PC-9 (cell line): ENCODE measurements at regions of chrX and their contacts with region 1.

Region 1: GRCh38 chrX:54044126-54044876 is at the start of gene PHF8:
- DNase-seq: peak; percentile 93 to 98
- H3K4me3 ChIP-seq: peak within 1 kb of the TSS; percentile 96
- H3K27ac ChIP-seq: peak within 1 kb of the TSS; percentile 98
- H3K4me1 ChIP-seq: peaks cover 17% of the 10 kb centered on the region
- H3K27me3 ChIP-seq: no peaks in the 10 kb centered on the region
- CTCF ChIP-seq: no peak
- total RNA-seq, gene PHF8: 40.0 and 56.4 TPM in 2 replicates

Region 2: GRCh38 chrX:53544940-53545339 is 499.4 kb before region 1 on chrX:
- CTCF ChIA-PET with region 1: interaction called, 10 read pairs
- POLR2A ChIA-PET with region 1: no interaction called
- intact Hi-C with region 1: no loop called
- DNase-seq: no peak
- H3K4me3 ChIP-seq: no peak overlapping the region
- H3K27ac ChIP-seq: no peak overlapping the region
- H3K4me1 ChIP-seq: no peaks in the 10 kb centered on the region
- H3K27me3 ChIP-seq: no peaks in the 10 kb centered on the region
- CTCF ChIP-seq: no peak

Region 3: GRCh38 chrX:54157561-54157960 is 113.3 kb after region 1 on chrX:
- CTCF ChIA-PET with region 1: interaction called, 14 read pairs
- POLR2A ChIA-PET with region 1: no interaction called
- intact Hi-C with region 1: no loop called
- DNase-seq: no peak
- H3K4me3 ChIP-seq: no peak overlapping the region
- H3K27ac ChIP-seq: no peak overlapping the region
- H3K4me1 ChIP-seq: no peaks in the 10 kb centered on the region
- H3K27me3 ChIP-seq: no peaks in the 10 kb centered on the region
- CTCF ChIP-seq: no peak

Region 4: DNA sequence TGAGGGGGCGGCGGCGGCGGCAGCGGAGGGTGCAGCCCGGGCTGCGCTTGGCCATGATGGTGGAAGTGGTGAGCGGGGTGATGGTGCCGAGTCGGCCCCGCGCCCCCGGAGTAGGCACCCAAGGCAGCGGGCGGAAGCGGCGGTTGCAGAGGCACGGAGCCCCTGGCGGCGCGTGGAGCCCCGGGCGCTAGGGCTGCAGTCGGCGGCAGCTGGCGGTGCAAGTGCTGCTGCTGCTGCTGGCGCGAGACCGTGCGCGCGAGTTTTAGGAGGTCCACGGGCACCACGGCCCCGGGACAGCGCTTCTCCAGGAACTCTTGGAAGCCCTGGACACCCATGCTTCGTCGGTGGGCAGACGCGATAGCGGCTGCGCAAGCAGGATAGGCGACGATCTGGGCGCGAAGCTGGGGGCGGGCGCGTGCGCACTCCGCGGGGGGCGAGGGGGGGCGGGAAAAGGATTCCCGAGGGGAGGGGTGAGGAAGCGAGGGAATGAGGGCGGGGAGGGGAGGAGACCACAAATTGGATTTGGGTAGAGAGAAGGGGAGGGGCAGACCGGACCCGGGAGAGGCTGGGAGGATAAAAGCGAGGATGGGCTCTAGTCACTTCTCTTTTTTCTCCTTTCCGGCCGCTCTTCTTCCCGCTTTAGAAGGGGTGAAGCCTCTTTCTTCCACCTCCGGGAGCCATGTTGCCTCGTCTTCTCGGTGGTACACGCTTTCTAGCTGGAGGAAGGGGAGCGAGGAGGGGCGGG is 138.7 kb after region 1 on chrX and contains the start of gene FAM120C:
- CTCF ChIA-PET with region 1: interaction called, 10 read pairs
- POLR2A ChIA-PET with region 1: interaction called, 4 read pairs
- intact Hi-C with region 1: loop called (anchors 1 kb)
- DNase-seq: peak; percentile 53 to 72
- H3K4me3 ChIP-seq: peak within 1 kb of the TSS; percentile 78
- H3K27ac ChIP-seq: peak within 1 kb of the TSS; percentile 73
- H3K4me1 ChIP-seq: peaks cover 40% of the 10 kb centered on the region
- H3K27me3 ChIP-seq: no peaks in the 10 kb centered on the region
- CTCF ChIP-seq: no peak
- total RNA-seq, gene FAM120C: 21.6 and 22.0 TPM in 2 replicates

Region 5: DNA sequence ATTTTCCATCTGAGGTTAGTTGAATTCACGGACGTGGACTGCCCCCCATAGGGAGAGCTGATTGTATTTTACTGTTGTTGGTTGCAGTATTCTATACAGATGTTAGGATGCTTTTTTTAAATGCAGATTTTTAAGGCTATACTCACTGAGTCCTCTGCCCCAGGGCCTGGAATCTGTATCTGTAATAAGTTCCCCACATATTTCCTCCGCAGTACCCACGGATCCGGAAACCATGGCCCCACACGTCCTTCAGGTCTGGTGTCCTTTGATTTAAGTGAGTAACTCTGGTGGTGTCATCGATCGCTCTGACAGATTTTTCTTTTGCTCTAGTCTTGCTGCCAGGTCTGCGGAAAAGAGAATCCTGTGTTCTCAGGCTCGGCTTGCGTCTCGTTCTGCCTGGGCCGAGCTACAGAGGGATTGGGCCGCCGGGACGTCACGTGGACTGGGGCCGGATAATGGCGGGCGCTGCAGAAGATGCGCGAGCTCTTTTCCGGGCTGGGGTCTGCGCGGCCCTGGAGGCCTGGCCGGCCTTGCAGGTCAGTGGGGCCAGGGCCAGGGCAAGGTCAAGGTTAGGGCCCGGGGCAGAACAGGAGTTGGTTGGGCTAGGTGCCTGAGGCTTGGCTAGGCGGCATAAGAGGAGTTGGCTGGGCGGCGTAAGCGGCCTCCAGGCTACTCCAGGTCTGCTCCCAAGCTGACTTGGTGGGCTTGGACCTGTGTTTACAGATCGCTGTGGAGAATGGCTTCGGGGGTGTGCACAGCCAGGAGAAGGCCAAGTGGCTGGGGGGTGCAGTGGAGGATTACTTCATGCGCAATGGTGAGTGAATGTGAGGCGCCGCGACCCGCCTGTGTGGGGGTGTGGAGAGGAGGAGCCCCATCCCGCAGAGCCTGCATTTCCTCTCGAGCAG is 395.9 kb after region 1 on chrX and contains the start of gene TSR2:
- CTCF ChIA-PET with region 1: no interaction called
- POLR2A ChIA-PET with region 1: no interaction called
- intact Hi-C with region 1: loop called (anchors 5 kb)
- DNase-seq: peak; percentile 76 to 80
- H3K4me3 ChIP-seq: peak within 1 kb of the TSS; percentile 83
- H3K27ac ChIP-seq: no peak within 1 kb of the TSS
- H3K4me1 ChIP-seq: peaks cover 8% of the 10 kb centered on the region
- H3K27me3 ChIP-seq: no peaks in the 10 kb centered on the region
- CTCF ChIP-seq: peak; percentile 23; the same call in 1 of the 2 replicates
- total RNA-seq, gene TSR2: 53.0 and 56.9 TPM in 2 replicates

Region 6: GRCh38 chrX:54808605-54809483 is 764.5 kb after region 1 on chrX:
- CTCF ChIA-PET with region 1: interaction called, 11 read pairs
- POLR2A ChIA-PET with region 1: no interaction called
- intact Hi-C with region 1: no loop called
- DNase-seq: peak; percentile 84 to 97
- H3K4me3 ChIP-seq: peak overlapping the region; percentile 86
- H3K27ac ChIP-seq: no peak overlapping the region
- H3K4me1 ChIP-seq: peaks cover 8% of the 10 kb centered on the region; the same call in 1 of the 2 replicates
- H3K27me3 ChIP-seq: peaks cover 9% of the 10 kb centered on the region; the same call in 1 of the 2 replicates
- CTCF ChIP-seq: no peak